Stomach (tissue), 19 donors: ENCODE measurements at regions of chr12 and their contacts with region 1.

Region 1: DNA sequence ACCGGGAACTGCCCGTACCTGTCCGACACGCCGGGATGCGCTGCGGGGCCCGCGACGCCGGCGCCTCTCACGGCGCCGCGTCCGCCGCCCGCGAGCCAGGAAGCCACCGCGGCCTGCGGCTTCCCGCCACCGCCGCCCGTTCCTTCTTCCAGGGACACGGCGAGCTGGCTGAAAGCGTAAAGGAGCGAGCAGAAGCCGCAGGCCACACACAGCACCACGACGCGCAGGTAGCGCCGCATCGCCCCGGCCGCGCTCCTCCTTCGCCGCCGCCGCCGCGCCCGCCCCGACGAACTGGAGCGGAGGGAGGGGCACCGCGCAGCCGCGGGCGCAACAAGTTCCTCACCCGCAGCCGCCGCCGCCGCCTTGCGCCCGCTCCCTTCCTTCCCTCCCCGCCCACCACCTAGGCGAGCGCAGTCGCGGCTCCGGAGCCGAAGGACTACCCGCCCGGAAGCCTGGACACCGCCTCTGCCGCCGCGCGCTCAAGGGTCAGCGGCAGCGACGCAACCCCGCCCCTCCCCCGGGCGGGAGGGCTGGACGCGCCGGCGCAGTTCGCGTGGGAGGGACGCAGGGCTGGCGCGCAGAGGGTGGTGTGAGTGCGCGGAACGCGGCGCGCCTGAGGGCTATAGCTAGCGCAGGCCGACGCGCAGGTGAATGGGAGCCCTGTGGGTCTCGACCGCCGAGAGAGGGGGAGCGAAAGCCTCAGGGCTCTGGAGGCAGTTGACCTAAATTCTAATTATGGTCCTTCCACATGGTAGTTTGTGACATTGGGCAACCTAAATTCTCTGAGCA is at the start of gene GXYLT1:
- DNase-seq: peak; percentile 94 to 98
- H3K4me3 ChIP-seq: peak within 1 kb of the TSS; percentile 70 to 87 (median 84)
- H3K27ac ChIP-seq: peak within 1 kb of the TSS; percentile 85 to 98 (median 92)
- H3K4me1 ChIP-seq: peaks cover 8 to 43% (median 30%) of the 10 kb centered on the region in 4 donors
- H3K27me3 ChIP-seq: no peaks in the 10 kb centered on the region
- CTCF ChIP-seq: no peak
- EP300 ChIP-seq: no peak
- POLR2A ChIP-seq: no peak
- total RNA-seq, gene GXYLT1: 3.2 to 17.6 (median 11.7) TPM

Region 2: GRCh38 chr12:42237052-42237852 is 92.7 kb after region 1 on chr12:
- intact Hi-C with region 1: loop called (anchors 5 kb)
- DNase-seq: peak; percentile 79 to 93
- H3K4me3 ChIP-seq: peak overlapping the region; percentile 72 to 98 (median 92)
- H3K27ac ChIP-seq: peak overlapping the region; percentile 91 to 100 (median 94)
- H3K4me1 ChIP-seq: peaks cover 19 to 55% (median 31%) of the 10 kb centered on the region in 4 donors
- H3K27me3 ChIP-seq: no peaks in the 10 kb centered on the region
- CTCF ChIP-seq: peak in 4 of 7 experiments; percentile 21 to 37 (median 25)
- EP300 ChIP-seq: no peak
- POLR2A ChIP-seq: no peak